K562 (cell line): ENCODE measurements at regions of chr5 and their contacts with region 1.

Region 1: DNA sequence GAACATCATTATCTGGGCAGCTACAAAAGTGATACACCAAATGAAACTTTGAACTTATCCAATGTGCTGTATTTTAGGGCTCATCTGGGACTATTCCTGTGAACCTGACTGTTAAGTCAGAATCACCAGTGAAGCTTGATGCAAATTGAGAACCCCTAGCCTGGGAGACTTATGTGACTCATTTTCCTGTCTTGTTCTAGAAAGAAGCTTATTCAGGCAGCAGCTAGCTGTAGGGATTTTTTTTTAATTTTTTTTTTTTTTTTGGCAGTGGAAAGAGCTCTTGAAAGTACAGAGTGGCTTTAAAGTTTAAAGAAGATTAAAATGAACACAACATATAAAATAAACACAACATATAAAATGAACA is 81.1 kb upstream of the TNFAIP8 start:
- DNase-seq: no peak
- ATAC-seq: no peak
- H3K4me3 ChIP-seq: no peak overlapping the region
- H3K27ac ChIP-seq: no peak overlapping the region
- H3K4me1 ChIP-seq: peaks cover 13 to 41% of the 10 kb centered on the region in 2 experiments; a peak in 4 of 5 replicates
- H3K27me3 ChIP-seq: no peaks in the 10 kb centered on the region
- CTCF ChIP-seq: no peak
- EP300 ChIP-seq: no peak
- POLR2A ChIP-seq: no peak
- RAD21 ChIP-seq: no peak

Region 2: GRCh38 chr5:118590806-118591205 is 683.9 kb before region 1 on chr5:
- CTCF ChIA-PET with region 1: no interaction called
- POLR2A ChIA-PET with region 1: no interaction called
- in situ Hi-C with region 1: no loop called
- intact Hi-C with region 1: no loop called
- DNase-seq: no peak
- ATAC-seq: no peak
- H3K4me3 ChIP-seq: no peak overlapping the region
- H3K27ac ChIP-seq: no peak overlapping the region
- H3K4me1 ChIP-seq: no peaks in the 10 kb centered on the region
- H3K27me3 ChIP-seq: no peaks in the 10 kb centered on the region
- CTCF ChIP-seq: no peak
- EP300 ChIP-seq: no peak
- POLR2A ChIP-seq: no peak
- RAD21 ChIP-seq: no peak

Region 3: DNA sequence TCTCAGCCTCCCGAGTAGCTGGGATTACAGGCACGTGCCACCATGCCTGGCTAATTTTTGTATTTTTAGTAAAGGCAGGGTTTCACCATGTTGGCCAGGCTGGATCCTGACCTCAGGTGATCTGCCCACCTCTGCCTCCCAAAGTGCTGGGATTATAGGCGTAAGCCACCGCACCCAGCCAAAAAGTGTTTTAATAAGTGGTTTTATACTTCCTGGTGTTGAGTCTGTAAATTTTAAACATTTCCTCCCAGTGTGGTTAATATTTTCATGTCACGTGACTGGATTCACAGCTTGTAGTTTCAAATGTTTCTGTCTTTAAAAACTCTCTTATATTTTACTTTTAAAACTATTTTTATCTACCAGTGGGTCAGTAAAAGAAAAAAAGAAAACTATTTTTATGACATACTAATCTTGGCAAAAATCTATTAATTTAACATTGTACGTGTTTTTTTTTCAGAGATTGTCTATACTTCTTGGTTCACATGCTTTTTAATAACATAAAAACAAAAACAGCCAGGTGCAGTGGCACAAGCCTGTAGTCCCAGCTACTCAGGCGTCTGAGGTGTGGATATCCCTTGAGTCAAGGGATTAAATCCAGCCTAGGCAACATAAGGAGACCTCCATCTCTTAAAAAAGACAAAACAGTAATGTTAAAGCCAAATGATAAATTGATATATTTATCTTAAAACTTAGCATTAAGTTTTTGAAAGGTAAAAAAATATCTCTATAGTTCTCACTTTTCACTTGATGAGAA is 86.8 kb before region 1 on chr5:
- CTCF ChIA-PET with region 1: no interaction called
- POLR2A ChIA-PET with region 1: no interaction called
- in situ Hi-C with region 1: no loop called
- intact Hi-C with region 1: no loop called
- DNase-seq: no peak
- ATAC-seq: no peak
- H3K4me3 ChIP-seq: no peak overlapping the region
- H3K27ac ChIP-seq: no peak overlapping the region
- H3K4me1 ChIP-seq: no peaks in the 10 kb centered on the region; a peak in 1 of 5 replicates
- H3K27me3 ChIP-seq: no peaks in the 10 kb centered on the region
- CTCF ChIP-seq: no peak
- EP300 ChIP-seq: no peak
- POLR2A ChIP-seq: no peak
- RAD21 ChIP-seq: no peak

Region 4: DNA sequence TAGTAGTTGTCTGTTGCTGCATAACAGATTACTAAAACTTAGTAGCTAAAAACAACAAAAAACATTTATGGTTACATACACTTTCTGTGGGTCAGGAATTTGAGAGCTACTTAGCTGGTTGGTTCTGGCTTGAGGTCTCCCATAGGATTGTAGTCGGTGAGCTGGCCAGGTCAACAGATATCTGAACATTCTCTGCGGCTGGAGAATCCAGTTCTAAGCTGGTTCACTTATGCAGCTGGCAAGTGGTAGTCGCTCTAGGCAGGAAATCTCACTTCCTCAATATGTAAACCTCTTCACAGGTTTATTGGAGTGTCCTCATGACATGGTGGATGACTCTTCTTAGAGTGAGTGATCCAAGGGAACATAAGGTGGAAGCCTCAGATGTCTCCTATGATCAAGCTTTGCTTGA is 15.4 kb after region 1 on chr5:
- CTCF ChIA-PET with region 1: no interaction called
- POLR2A ChIA-PET with region 1: interaction called, 14 read pairs
- in situ Hi-C with region 1: no loop called
- intact Hi-C with region 1: no loop called
- DNase-seq: no peak
- ATAC-seq: peak; percentile 55
- H3K4me3 ChIP-seq: no peak overlapping the region
- H3K27ac ChIP-seq: no peak overlapping the region
- H3K4me1 ChIP-seq: peaks cover 12 to 57% of the 10 kb centered on the region in 2 experiments
- H3K27me3 ChIP-seq: no peaks in the 10 kb centered on the region
- CTCF ChIP-seq: no peak
- EP300 ChIP-seq: no peak
- POLR2A ChIP-seq: no peak
- RAD21 ChIP-seq: no peak

Region 5: GRCh38 chr5:119309326-119309725 is 34.6 kb after region 1 on chr5:
- CTCF ChIA-PET with region 1: no interaction called
- POLR2A ChIA-PET with region 1: no interaction called
- in situ Hi-C with region 1: no loop called
- intact Hi-C with region 1: loop called (anchors 5 kb)
- DNase-seq: no peak
- ATAC-seq: no peak; the same call in 2 of the 3 replicates
- H3K4me3 ChIP-seq: no peak overlapping the region
- H3K27ac ChIP-seq: peak overlapping the region; percentile 41; the same call in 2 of the 3 replicates
- H3K4me1 ChIP-seq: peaks cover 14 to 43% of the 10 kb centered on the region in 2 experiments
- H3K27me3 ChIP-seq: no peaks in the 10 kb centered on the region
- CTCF ChIP-seq: no peak
- EP300 ChIP-seq: no peak
- POLR2A ChIP-seq: no peak
- RAD21 ChIP-seq: no peak

Region 6: DNA sequence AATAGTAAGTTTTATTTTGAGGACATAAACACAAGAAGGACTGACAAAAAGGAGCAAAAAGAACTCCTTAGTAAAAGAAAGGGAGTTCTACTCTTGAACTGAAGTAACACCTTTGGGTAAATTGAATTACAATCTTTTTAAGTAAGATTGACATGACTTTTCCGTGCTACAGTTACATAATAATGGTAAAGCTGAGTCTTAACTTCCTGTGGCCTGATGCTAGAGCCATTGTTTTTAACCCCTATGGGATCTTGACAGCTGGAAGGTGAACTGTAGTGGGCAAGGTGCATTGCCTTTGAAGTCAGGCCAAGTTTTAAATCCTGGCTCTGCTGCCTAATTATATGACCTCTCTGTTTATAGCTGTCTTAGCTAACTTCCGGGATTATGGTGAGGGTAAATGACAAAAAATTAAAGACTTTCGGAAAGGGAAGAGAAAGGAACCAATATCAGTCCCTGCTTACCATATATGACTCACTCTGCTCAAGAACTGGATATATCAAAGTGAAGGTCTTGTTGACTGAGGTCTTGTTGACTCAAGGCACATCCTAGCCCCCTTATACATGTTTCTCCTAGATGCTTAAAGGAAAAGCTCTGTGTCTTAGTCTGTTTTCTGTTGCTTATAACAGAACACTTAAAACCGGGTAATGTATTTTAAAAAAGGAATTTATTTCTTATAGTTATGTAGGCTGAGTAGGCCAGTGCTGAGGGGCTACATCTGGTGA is 184.3 kb after region 1 on chr5:
- CTCF ChIA-PET with region 1: no interaction called
- POLR2A ChIA-PET with region 1: no interaction called
- in situ Hi-C with region 1: no loop called
- intact Hi-C with region 1: no loop called
- DNase-seq: no peak
- ATAC-seq: no peak
- H3K4me3 ChIP-seq: no peak overlapping the region
- H3K27ac ChIP-seq: no peak overlapping the region
- H3K4me1 ChIP-seq: no peaks in the 10 kb centered on the region
- H3K27me3 ChIP-seq: no peaks in the 10 kb centered on the region
- CTCF ChIP-seq: no peak
- EP300 ChIP-seq: no peak
- POLR2A ChIP-seq: no peak
- RAD21 ChIP-seq: no peak